Mammary epithelial cell (primary cell): ENCODE measurements at regions of chr2 and their contacts with region 1.

Region 1: GRCh38 chr2:145484443-145485097 is 964.7 kb upstream of the ZEB2 start:
- DNase-seq: peak; percentile 84
- H3K4me3 ChIP-seq: no peak overlapping the region
- H3K27ac ChIP-seq: peak overlapping the region; percentile 24
- H3K4me1 ChIP-seq: peaks cover 7% of the 10 kb centered on the region
- H3K27me3 ChIP-seq: no peaks in the 10 kb centered on the region
- CTCF ChIP-seq: peak; percentile 44 to 57

Region 2: DNA sequence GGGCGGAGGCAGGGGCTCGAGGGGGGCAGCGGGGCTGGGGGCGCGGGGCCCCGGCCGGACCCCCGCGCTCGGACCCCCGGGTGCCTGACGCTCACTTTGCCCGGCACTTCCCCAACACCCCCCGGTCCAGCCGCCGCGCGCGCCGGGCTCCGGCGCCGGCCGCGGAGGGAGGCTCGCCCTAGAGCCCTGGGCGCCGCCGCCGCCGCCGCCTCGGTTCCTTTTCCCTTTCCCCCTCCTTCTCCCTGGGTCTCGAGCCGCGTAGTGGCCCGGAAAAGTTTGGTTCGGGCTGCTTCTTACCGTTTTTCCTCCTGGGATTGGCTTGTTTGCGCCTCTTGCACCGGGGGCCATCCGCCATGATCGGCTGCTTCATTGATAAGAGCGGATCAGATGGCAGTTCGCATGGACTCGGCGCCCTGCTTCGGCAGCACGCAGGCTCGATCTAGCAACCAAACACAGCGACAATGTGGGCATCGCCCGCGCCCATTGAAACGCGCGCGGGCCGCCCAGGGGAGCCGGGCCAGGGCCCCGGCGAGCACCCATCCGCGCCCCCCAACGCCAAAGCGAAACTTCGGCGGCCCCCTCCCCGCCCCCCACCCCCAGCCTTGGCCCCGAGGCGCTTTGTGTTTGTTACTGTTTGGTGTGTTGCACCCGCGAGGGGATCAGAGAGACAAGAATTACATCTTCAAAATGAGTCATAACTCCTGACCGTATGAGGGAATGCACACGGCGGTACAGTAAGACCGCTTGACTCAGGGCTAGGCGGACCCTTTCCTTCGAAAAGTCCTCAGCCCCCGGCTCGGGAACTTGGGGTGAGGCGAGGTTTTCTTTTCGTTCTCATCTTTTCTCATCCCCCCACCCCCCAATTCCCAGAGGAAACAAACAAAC is 967.3 kb before region 1 on chr2:
- CTCF ChIA-PET with region 1: no interaction called
- dilution Hi-C with region 1: no loop called
- in situ Hi-C with region 1: no loop called
- intact Hi-C with region 1: loop called (anchors 5 kb)
- DNase-seq: peak; percentile 68
- H3K4me3 ChIP-seq: peak overlapping the region; percentile 71 to 90 (median 74)
- H3K27ac ChIP-seq: no peak overlapping the region
- H3K4me1 ChIP-seq: peaks cover 14% of the 10 kb centered on the region
- H3K27me3 ChIP-seq: peaks cover 65% of the 10 kb centered on the region
- CTCF ChIP-seq: no peak

Region 3: GRCh38 chr2:144890828-144891227 is 593.7 kb before region 1 on chr2:
- CTCF ChIA-PET with region 1: no interaction called
- dilution Hi-C with region 1: no loop called
- in situ Hi-C with region 1: no loop called
- intact Hi-C with region 1: loop called (anchors 10 kb)
- DNase-seq: peak; percentile 40
- H3K4me3 ChIP-seq: no peak overlapping the region
- H3K27ac ChIP-seq: no peak overlapping the region
- H3K4me1 ChIP-seq: no peaks in the 10 kb centered on the region
- H3K27me3 ChIP-seq: no peaks in the 10 kb centered on the region
- CTCF ChIP-seq: peak; percentile 27 to 46

Region 4: DNA sequence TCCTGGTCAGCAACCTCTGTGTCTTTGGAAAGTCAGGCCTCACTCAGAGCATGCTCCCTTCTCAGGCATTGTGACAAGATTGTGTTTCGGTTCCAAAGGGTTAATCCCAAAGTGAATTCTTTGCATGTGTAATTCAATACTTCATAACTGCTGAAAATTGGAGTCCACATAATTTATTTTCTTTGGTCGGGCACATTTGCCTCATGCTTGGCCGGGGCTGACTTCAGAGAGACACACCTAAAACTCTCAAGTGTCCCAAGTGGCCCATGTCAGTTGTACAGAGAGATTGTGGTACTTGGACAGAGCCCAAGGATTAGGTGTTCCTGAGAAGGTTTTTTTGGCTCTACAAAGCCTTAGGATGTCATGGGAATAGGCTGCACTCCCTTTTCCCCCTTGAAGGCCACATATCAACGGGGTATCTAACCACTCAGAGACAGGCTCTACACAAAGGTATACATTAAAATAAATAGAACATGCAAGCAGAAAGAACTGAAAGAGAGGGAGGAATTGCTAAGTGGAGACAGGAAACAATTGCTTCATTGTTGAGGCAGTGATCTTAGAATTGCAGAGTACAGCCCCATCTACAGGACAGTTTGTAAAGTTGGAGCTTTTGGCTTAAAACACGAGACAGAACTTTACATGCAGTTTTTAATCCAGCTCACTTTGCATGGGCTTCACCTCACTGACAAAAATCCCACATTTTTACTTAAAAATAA is 267.7 kb after region 1 on chr2:
- CTCF ChIA-PET with region 1: interaction called, 3 read pairs
- dilution Hi-C with region 1: no loop called
- in situ Hi-C with region 1: no loop called
- intact Hi-C with region 1: loop called (anchors 2 kb)
- DNase-seq: peak; percentile 65
- H3K4me3 ChIP-seq: no peak overlapping the region
- H3K27ac ChIP-seq: no peak overlapping the region
- H3K4me1 ChIP-seq: peaks cover 14% of the 10 kb centered on the region
- H3K27me3 ChIP-seq: no peaks in the 10 kb centered on the region
- CTCF ChIP-seq: peak; percentile 73 to 77